IMR-90 (cell line): ENCODE measurements at regions of chr1 and their contacts with region 1.

Region 1: DNA sequence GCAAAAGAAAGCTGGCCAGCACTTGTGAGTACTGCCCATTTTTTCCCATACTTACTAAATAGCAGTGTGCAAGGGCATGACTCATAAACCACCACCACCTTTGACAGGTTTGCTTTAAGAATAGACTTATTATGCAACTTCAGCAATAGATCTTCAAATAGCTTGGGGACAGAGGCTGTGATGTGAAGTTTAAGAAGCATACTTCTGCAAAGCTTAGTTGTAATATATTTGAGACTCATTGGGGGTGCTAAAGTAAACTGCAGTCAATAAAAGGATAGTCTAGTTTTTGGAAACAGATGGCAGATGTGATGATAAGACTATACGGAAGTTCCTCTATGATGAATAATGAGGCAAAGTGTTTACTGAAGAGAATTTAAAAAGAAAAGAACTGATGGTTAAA is 210.0 kb downstream of the PLA2G4A start:
- DNase-seq: peak; percentile 61
- ATAC-seq: peak; percentile 27; the same call in 1 of the 2 replicates
- H3K4me3 ChIP-seq: no peak overlapping the region
- H3K27ac ChIP-seq: no peak overlapping the region
- H3K4me1 ChIP-seq: no peaks in the 10 kb centered on the region
- H3K27me3 ChIP-seq: no peaks in the 10 kb centered on the region
- CTCF ChIP-seq: no peak
- POLR2A ChIP-seq: no peak
- RAD21 ChIP-seq: no peak

Region 2: GRCh38 chr1:186974774-186975181 is 64.0 kb before region 1 on chr1:
- CTCF ChIA-PET with region 1: no interaction called
- POLR2A ChIA-PET with region 1: no interaction called
- dilution Hi-C with region 1: no loop called
- in situ Hi-C with region 1: no loop called
- intact Hi-C with region 1: no loop called
- DNase-seq: peak; percentile 99
- ATAC-seq: peak; percentile 87
- H3K4me3 ChIP-seq: peak overlapping the region; percentile 8; the same call in 1 of the 2 replicates
- H3K27ac ChIP-seq: no peak overlapping the region; the same call in 1 of the 2 replicates
- H3K4me1 ChIP-seq: peaks cover 5% of the 10 kb centered on the region
- H3K27me3 ChIP-seq: no peaks in the 10 kb centered on the region
- CTCF ChIP-seq: no peak
- POLR2A ChIP-seq: peak; percentile 34; the same call in 1 of the 2 replicates
- RAD21 ChIP-seq: no peak

Region 3: GRCh38 chr1:188117436-188117835 is 1078.6 kb after region 1 on chr1:
- CTCF ChIA-PET with region 1: no interaction called
- POLR2A ChIA-PET with region 1: no interaction called
- dilution Hi-C with region 1: no loop called
- in situ Hi-C with region 1: no loop called
- intact Hi-C with region 1: loop called (anchors 10 kb)
- DNase-seq: no peak
- ATAC-seq: no peak
- H3K4me3 ChIP-seq: no peak overlapping the region
- H3K27ac ChIP-seq: no peak overlapping the region
- H3K4me1 ChIP-seq: no peaks in the 10 kb centered on the region
- H3K27me3 ChIP-seq: no peaks in the 10 kb centered on the region
- CTCF ChIP-seq: no peak
- POLR2A ChIP-seq: no peak
- RAD21 ChIP-seq: no peak